Left cardiac atrium (tissue), 4 donors: ENCODE measurements at regions of chr4 and their contacts with region 1.

Region 1: GRCh38 chr4:148434075-148434773 is 8.0 kb downstream of the NR3C2 start:
- DNase-seq: no peak
- ATAC-seq: no peak

Region 2: GRCh38 chr4:148344352-148344751 is 89.9 kb before region 1 on chr4:
- intact Hi-C with region 1: loop called in 1 of 2 experiments (anchors 10 kb)
- DNase-seq: peak; percentile 25
- ATAC-seq: peak in 1 of 2 donors; percentile 21